MCF 10A (cell line): ENCODE measurements at regions of chr14 and their contacts with region 1.

Region 1: GRCh38 chr14:94748667-94749347 is 21.1 kb downstream of the GSC start:
- DNase-seq: peak; percentile 56
- H3K4me3 Mint-ChIP-seq: no peak overlapping the region
- H3K27ac Mint-ChIP-seq: no peak overlapping the region
- H3K4me1 Mint-ChIP-seq: no peaks in the 10 kb centered on the region
- H3K27me3 Mint-ChIP-seq: peaks cover 16% of the 10 kb centered on the region
- CTCF ChIP-seq: peak; percentile 38

Region 2: DNA sequence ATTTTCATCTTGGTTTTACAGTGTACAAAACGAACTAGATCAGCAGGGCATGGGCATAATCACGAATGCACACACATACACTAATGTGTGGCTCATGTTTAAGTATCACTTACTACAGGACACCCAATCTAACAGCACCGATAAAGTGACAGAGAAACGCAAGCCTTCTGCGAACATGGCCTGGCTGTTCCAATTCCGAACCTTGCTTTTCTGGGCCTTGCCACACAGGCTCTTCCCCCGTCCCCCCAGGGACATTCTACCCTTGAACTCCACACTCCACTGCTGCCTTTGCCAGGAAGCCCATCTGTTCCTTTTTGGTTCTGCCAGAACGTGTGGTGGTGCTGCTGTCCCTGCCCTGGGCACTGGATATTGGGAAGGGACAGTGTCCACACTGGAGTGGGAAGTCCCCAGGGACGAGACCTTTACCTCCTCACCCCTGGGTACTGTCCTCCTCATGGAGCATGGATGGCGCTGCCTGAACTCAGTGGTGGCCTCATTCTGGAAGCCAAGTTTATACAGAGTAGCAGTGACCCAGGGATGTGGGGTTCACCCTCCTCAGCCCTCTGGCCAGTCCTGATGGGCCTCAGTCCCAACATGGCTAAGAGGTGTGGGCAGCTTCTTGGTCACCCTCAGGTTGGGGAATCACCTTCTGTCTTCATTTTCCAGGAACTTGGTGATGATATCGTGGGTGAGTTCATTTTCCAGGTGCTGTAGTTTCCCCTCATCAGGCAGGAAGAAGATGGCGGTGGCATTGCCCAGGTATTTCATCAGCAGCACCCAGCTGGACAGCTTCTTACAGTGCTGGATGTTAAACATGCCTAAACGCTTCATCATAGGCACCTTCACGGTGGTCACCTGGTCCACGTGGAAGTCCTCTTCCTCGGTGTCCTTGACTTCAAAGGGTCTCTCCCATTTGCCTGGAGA is 368.3 kb before region 1 on chr14:
- CTCF ChIA-PET with region 1: no interaction called
- POLR2A ChIA-PET with region 1: no interaction called
- intact Hi-C with region 1: no loop called
- DNase-seq: no peak
- H3K4me3 Mint-ChIP-seq: no peak overlapping the region
- H3K27ac Mint-ChIP-seq: peak overlapping the region; percentile 66
- H3K4me1 Mint-ChIP-seq: no peaks in the 10 kb centered on the region
- H3K27me3 Mint-ChIP-seq: no peaks in the 10 kb centered on the region
- CTCF ChIP-seq: no peak

Region 3: GRCh38 chr14:94717808-94718207 is 31.0 kb before region 1 on chr14:
- CTCF ChIA-PET with region 1: no interaction called
- POLR2A ChIA-PET with region 1: no interaction called
- intact Hi-C with region 1: no loop called
- DNase-seq: peak; percentile 14
- H3K4me3 Mint-ChIP-seq: no peak overlapping the region
- H3K27ac Mint-ChIP-seq: no peak overlapping the region
- H3K4me1 Mint-ChIP-seq: no peaks in the 10 kb centered on the region
- H3K27me3 Mint-ChIP-seq: peaks cover 14% of the 10 kb centered on the region
- CTCF ChIP-seq: peak; percentile 23

Region 4: DNA sequence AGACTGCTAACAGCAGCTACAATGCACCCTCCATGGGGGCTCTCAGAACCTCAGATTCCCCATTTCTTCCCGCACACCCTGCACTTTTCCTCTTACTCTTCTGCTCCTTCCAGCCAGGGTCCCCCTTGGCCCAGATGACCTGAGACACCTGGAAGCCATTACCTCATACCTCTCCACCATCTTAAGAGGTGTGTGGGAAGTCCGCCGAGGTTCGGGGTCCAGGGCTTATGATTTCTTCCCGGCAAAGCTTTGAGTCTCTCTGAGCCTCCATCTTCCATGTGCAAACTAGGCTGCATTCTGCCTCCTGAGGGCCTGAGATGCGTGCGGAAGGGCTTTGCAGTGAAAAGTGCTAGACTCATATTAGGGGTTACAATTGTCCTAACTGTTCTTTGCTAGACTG is 15.8 kb after region 1 on chr14:
- CTCF ChIA-PET with region 1: interaction called, 14 read pairs
- POLR2A ChIA-PET with region 1: no interaction called
- intact Hi-C with region 1: no loop called
- DNase-seq: no peak
- H3K4me3 Mint-ChIP-seq: no peak overlapping the region
- H3K27ac Mint-ChIP-seq: no peak overlapping the region
- H3K4me1 Mint-ChIP-seq: no peaks in the 10 kb centered on the region
- H3K27me3 Mint-ChIP-seq: peaks cover 37% of the 10 kb centered on the region
- CTCF ChIP-seq: no peak